PC-9 (cell line): ENCODE measurements at regions of chr16 and their contacts with region 1.

Region 1: GRCh38 chr16:15899538-15900100 is 11.2 kb upstream of the CEP20 start:
- DNase-seq: peak; percentile 94 to 100
- H3K4me3 ChIP-seq: peak overlapping the region; percentile 22; the same call in 1 of the 2 replicates
- H3K27ac ChIP-seq: peak overlapping the region; percentile 89
- H3K4me1 ChIP-seq: peaks cover 56% of the 10 kb centered on the region
- H3K27me3 ChIP-seq: no peaks in the 10 kb centered on the region
- CTCF ChIP-seq: no peak

Region 2: GRCh38 chr16:15865742-15866141 is 33.9 kb before region 1 on chr16:
- CTCF ChIA-PET with region 1: no interaction called
- POLR2A ChIA-PET with region 1: no interaction called
- intact Hi-C with region 1: no loop called
- DNase-seq: no peak
- H3K4me3 ChIP-seq: no peak overlapping the region
- H3K27ac ChIP-seq: no peak overlapping the region
- H3K4me1 ChIP-seq: no peaks in the 10 kb centered on the region
- H3K27me3 ChIP-seq: no peaks in the 10 kb centered on the region
- CTCF ChIP-seq: no peak

Region 3: DNA sequence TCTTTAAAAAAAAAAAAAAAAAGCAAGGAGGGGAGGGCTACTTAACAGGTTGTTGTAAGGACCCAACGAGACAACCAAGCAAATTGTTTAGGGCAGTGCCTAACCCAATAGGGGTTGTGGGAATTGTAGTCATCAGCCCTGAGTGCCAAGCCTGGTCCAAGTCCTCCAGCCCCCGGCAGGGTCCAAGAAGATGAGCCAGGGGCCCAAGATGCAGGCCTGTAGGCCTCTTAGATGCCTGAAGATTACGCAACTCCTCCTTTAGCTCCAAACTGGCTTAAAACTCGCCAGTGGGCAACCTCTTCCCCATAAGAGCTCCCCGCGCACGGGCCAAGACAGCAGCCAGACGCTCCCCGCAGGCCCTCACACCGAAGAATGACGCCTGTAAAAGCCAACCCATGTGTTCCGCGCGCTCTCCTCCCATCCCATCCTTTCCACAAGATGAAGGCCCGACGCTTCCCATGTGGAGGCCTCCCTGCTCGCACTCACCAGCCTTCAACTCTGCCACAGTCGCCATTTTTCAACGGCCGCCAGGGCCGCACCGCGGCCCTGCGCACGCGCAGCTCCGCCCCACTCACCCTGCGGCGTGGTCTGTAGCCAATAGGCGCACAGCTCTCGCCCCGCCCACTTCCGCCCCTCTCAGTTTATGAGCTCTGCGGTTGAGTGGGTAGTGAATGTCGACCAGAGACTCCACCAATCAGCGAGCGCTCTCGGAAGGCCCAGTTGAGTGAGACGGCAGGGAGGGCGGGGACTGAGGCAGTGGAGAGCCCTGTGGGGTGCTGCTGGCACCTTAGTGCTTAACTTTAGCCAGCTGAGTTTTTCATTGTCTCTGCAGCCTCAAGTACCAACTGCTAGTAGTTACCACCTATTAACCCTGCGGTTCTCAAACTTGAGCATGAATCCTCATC is 11.3 kb before region 1 on chr16 and contains the start of gene CEP20:
- CTCF ChIA-PET with region 1: interaction called, 3 read pairs
- POLR2A ChIA-PET with region 1: interaction called, 31 read pairs
- intact Hi-C with region 1: no loop called
- DNase-seq: peak; percentile 97 to 100
- H3K4me3 ChIP-seq: peak within 1 kb of the TSS; percentile 90
- H3K27ac ChIP-seq: peak within 1 kb of the TSS; percentile 65
- H3K4me1 ChIP-seq: peaks cover 30% of the 10 kb centered on the region
- H3K27me3 ChIP-seq: no peaks in the 10 kb centered on the region
- CTCF ChIP-seq: no peak
- total RNA-seq, gene CEP20: 93.4 and 125 TPM in 2 replicates

Region 4: DNA sequence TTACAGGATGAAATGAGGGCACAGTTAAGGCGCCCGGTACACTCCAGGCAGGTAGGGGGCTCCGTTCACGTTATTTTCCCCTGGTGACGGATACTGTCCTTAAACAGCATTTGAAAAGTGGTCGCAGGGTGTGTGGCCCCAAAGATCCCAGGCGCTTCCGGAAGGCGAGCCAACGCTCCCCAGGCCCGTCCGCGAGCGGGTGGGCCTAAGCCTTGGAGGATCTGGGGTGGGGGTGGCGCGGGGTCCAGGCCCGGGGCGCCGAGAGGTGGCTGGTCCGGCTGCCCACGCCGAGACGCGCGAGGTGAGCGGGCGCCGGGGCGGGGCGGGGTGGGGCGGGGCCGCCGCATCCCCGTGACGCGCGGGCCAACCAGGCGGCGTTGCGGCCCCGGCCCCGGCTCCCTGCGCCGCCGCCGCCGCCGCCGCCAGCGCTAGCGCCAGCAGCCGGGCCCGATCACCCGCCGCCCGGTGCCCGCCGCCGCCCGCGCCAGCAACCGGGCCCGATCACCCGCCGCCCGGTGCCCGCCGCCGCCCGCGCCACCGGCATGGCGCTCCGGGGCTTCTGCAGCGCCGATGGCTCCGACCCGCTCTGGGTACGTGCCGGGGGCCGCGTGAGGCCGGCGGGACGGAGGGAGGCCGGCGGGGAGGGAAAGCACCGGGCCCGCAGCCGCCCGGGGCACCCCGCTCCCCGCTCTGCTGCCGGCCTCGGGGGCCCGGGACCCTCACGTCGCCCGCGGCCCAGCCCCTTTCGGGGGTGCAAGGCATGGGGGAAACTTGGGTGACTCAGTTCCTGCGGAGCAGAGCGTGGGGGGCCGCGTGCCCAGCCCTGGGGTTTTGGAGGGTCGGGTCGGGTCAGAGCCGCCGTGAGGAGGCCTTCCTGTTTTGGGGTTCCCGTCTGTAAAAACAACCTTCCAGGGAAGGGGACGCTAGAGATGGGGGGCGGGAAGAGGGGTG is 49.9 kb after region 1 on chr16 and contains the start of gene ABCC1:
- CTCF ChIA-PET with region 1: interaction called, 7 read pairs
- POLR2A ChIA-PET with region 1: interaction called, 5 read pairs
- intact Hi-C with region 1: loop called (anchors 5 kb)
- DNase-seq: peak in 1 of 2 experiments; percentile 51
- H3K4me3 ChIP-seq: peak within 1 kb of the TSS; percentile 96
- H3K27ac ChIP-seq: peak within 1 kb of the TSS; percentile 61
- H3K4me1 ChIP-seq: peaks cover 52% of the 10 kb centered on the region
- H3K27me3 ChIP-seq: no peaks in the 10 kb centered on the region
- CTCF ChIP-seq: no peak; the same call in 1 of the 2 replicates
- total RNA-seq, gene ABCC1: 139 and 146 TPM in 2 replicates

Region 5: GRCh38 chr16:15966420-15967222 is 67.0 kb after region 1 on chr16:
- CTCF ChIA-PET with region 1: no interaction called
- POLR2A ChIA-PET with region 1: interaction called, 3 read pairs
- intact Hi-C with region 1: loop called (anchors 1 kb)
- DNase-seq: peak; percentile 83 to 88
- H3K4me3 ChIP-seq: no peak overlapping the region; the same call in 1 of the 2 replicates
- H3K27ac ChIP-seq: peak overlapping the region; percentile 73
- H3K4me1 ChIP-seq: peaks cover 57% of the 10 kb centered on the region
- H3K27me3 ChIP-seq: no peaks in the 10 kb centered on the region
- CTCF ChIP-seq: no peak

Region 6: GRCh38 chr16:15976929-15977637 is 77.5 kb after region 1 on chr16:
- CTCF ChIA-PET with region 1: no interaction called
- POLR2A ChIA-PET with region 1: no interaction called
- intact Hi-C with region 1: no loop called
- DNase-seq: no peak
- H3K4me3 ChIP-seq: no peak overlapping the region
- H3K27ac ChIP-seq: peak overlapping the region; percentile 49
- H3K4me1 ChIP-seq: 0 out of 2 replicates have a peak, but pooled peaks cover 1% of the 10 kb centered on the region
- H3K27me3 ChIP-seq: no peaks in the 10 kb centered on the region
- CTCF ChIP-seq: no peak

Region 7: GRCh38 chr16:16021988-16022682 is 122.5 kb after region 1 on chr16:
- CTCF ChIA-PET with region 1: no interaction called
- POLR2A ChIA-PET with region 1: no interaction called
- intact Hi-C with region 1: loop called (anchors 2 kb)
- DNase-seq: peak; percentile 96 to 99
- H3K4me3 ChIP-seq: peak overlapping the region; percentile 37; the same call in 1 of the 2 replicates
- H3K27ac ChIP-seq: peak overlapping the region; percentile 73
- H3K4me1 ChIP-seq: peaks cover 94% of the 10 kb centered on the region
- H3K27me3 ChIP-seq: no peaks in the 10 kb centered on the region
- CTCF ChIP-seq: no peak

Region 8: GRCh38 chr16:16073891-16074881 is 174.6 kb after region 1 on chr16:
- CTCF ChIA-PET with region 1: no interaction called
- POLR2A ChIA-PET with region 1: no interaction called
- intact Hi-C with region 1: loop called (anchors 2 kb)
- DNase-seq: peak; percentile 98 to 99
- H3K4me3 ChIP-seq: no peak overlapping the region; the same call in 1 of the 2 replicates
- H3K27ac ChIP-seq: peak overlapping the region; percentile 85
- H3K4me1 ChIP-seq: peaks cover 27% of the 10 kb centered on the region
- H3K27me3 ChIP-seq: no peaks in the 10 kb centered on the region
- CTCF ChIP-seq: no peak